OCI-LY7 (cell line): ENCODE measurements at regions of chr12 and their contacts with region 1.

Region 1: DNA sequence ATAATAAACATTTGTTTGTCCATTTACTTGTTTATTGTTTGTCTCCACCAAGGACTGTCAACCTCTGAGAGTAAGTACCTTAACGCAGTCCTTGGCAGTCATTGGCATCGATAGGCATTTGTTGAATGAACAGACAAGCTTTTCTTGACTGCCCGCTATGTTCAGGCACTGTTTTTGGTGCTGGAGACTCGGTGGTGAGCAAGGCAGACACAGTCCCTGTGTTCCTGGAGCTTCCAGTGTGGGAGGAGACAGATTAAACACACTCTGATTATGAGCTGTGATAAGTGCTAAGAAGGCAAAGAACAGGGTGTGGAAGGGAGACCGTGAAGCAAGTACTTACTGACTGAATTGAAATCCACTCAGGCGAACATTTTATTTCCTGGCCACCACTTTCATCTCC is 1.2 kb downstream of the ATP6V0A2 start:
- DNase-seq: peak; percentile 4
- H3K4me3 ChIP-seq: peak overlapping the region; percentile 87
- H3K27ac ChIP-seq: peak overlapping the region; percentile 33
- H3K4me1 ChIP-seq: peaks cover 25% of the 10 kb centered on the region
- CTCF ChIP-seq: no peak

Region 2: DNA sequence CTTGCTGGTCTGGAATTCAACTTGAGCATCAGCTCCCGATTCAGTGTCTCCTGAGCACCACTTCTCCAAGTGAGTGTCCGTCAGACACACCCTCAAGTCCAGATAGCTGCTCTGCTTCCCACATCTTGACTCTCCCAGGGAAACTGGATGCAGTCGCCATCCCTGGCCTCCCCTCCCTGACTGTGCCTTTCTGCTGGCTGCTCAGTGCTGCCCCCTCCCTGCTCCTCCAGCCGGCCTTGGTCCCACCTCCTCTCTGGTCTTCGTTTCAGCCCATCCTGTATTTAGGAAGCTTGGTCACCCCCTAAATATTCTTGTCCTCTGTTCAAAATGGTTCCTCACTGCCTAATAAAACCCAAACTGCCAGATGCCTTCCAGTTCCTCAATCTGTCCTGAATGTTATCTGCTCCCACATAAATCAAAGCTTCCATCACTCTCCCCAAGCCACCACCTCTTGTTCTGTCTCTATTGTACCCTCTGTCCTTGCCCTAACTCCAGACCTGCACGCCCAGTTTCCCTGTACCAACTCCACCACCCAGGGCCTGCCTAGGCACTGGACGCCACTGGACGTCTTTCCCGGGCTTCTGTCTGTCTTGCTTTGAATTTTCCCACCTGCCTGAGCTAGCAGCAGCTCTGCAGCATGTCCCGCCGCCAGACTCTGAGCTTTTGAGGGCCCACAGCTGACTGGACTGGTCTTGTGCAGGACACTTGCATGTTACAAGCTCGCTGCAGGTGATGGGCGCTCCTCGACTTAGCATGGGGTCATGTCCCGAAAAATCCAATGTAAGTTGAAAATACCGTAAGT is 225.5 kb after region 1 on chr12:
- CTCF ChIA-PET with region 1: no interaction called
- POLR2A ChIA-PET with region 1: no interaction called
- intact Hi-C with region 1: no loop called
- DNase-seq: peak; percentile 4
- H3K4me3 ChIP-seq: no peak overlapping the region
- H3K27ac ChIP-seq: no peak overlapping the region
- H3K4me1 ChIP-seq: no peaks in the 10 kb centered on the region
- CTCF ChIP-seq: peak; percentile 69

Region 3: DNA sequence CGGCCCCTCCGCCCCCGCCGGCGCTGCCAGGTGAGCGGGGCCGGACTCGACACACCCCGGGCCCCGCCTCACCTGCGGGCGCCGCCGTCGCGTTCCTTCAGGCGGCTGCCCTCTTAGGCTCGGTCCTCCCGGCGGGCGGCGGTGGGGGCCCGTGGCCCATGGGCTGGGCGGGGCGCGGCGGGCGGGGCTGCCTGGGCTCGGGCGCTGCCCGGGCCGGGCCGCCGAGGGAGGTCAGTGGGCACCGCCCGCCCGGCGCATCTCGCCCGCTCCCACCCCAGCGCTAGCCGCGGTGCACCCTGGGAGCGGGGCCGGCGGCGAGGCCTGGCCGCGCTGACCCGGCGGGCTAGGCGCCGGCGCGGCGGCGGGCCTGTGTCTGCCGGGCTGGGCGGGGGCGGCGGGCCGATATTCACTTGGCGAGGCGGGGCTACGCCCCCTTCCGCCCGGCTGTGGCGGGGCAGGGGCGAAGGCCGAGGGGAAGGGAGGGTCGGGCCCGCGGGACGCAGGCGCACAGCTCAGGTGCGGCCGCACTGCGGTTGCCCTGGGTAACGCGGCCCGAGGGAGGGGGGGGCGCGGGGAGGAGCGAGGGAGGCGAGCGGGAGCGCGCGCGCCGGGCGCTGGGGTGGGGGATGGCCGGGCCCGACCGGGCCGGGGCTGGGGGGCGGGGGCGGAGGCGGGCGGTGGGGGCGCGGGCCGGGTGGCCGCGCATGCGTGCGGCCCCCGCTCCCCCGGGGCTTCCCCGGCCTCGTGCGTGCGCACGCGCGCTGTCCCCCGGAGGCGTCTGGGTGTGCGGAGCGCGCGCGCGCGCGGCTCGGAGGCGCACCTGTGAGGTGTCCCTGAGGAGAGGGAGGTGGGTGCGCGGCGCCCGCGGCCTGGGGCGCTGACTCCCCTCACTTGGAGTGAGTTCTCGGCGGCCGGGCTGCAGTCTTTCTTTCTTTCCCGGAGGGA is 259.3 kb after region 1 on chr12 and contains the starts of genes CCDC92 and ZNF664:
- CTCF ChIA-PET with region 1: no interaction called
- POLR2A ChIA-PET with region 1: interaction called, 6 read pairs
- intact Hi-C with region 1: loop called (anchors 5 kb)
- DNase-seq: peak; percentile 94
- H3K4me3 ChIP-seq: peak within 1 kb of the TSS; percentile 84
- H3K27ac ChIP-seq: no peak within 1 kb of the TSS
- H3K4me1 ChIP-seq: peaks cover 17% of the 10 kb centered on the region
- CTCF ChIP-seq: no peak
- total RNA-seq, gene CCDC92: 2.5 and 3.1 TPM in 2 replicates
- total RNA-seq, gene ZNF664: 45.6 and 60.0 TPM in 2 replicates

Region 4: GRCh38 chr12:124725597-124726237 is 1012.3 kb after region 1 on chr12:
- CTCF ChIA-PET with region 1: interaction called, 10 read pairs
- POLR2A ChIA-PET with region 1: no interaction called
- intact Hi-C with region 1: no loop called
- DNase-seq: no peak
- H3K4me3 ChIP-seq: no peak overlapping the region
- H3K27ac ChIP-seq: no peak overlapping the region
- H3K4me1 ChIP-seq: no peaks in the 10 kb centered on the region
- CTCF ChIP-seq: no peak